Activated CD4-positive, alpha-beta memory T cell treated with anti-CD3 and anti-CD28 coated beads for 36 hours (primary cell): ENCODE measurements at regions of chr3 and their contacts with region 1.

Region 1: GRCh38 chr3:107938143-107938542 is 152.7 kb downstream of the CD47 start:
- DNase-seq: peak; percentile 20
- H3K4me3 Mint-ChIP-seq: no peak overlapping the region
- H3K27ac Mint-ChIP-seq: no peak overlapping the region
- H3K4me1 Mint-ChIP-seq: peaks cover 18% of the 10 kb centered on the region
- H3K27me3 Mint-ChIP-seq: no peaks in the 10 kb centered on the region

Region 2: GRCh38 chr3:107927361-107928083 is 10.6 kb before region 1 on chr3:
- CTCF ChIA-PET with region 1: interaction called, 27 read pairs
- POLR2A ChIA-PET with region 1: no interaction called
- intact Hi-C with region 1: loop called (anchors 2 kb)
- DNase-seq: peak; percentile 81
- H3K4me3 Mint-ChIP-seq: peak overlapping the region; percentile 72
- H3K27ac Mint-ChIP-seq: no peak overlapping the region
- H3K4me1 Mint-ChIP-seq: peaks cover 10% of the 10 kb centered on the region
- H3K27me3 Mint-ChIP-seq: peaks cover 5% of the 10 kb centered on the region

Region 3: DNA sequence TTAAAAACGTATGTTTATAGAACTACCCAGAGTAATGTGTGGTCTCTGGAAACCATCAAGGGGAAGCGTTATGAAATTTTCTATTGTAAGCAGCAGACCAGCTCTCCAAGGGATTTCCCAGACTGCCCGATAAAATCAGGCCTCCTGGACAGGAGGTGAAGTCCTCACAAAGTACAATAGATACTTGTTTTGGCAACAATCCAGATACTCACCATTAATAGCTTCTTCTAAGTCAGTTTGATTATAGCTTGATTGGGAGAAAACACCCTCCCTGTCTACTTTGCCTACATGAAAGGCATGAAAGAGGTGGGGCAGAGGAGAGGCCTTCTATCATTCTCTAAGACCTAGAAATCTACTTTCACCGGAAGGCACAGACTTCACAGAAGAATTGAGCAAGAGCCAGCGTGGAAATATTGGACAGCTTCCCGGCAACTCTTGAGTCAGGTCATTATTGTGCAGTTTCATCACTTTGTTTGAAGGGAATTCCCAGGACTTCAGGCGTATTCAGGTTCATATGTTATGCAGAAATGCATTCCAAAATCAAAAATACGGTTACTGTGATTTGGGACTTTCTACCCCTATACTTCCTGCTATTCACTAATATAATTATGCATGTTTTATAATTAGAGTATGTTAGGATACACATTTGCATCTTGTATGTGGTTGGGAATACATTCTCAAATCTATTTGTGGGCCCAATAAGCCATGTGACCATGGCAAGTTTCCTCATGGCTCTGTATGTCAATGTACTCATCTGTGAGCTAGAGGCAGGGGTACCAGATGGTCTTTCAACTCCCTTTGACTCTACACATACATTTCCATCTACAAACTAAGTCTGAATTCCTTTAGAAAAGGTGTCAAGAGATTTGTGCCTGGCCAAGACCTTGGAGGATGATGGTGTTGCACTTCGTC is 49.1 kb after region 1 on chr3:
- CTCF ChIA-PET with region 1: no interaction called
- POLR2A ChIA-PET with region 1: no interaction called
- intact Hi-C with region 1: loop called (anchors 2 kb)
- DNase-seq: no peak
- H3K4me3 Mint-ChIP-seq: no peak overlapping the region
- H3K27ac Mint-ChIP-seq: no peak overlapping the region
- H3K4me1 Mint-ChIP-seq: peaks cover 32% of the 10 kb centered on the region
- H3K27me3 Mint-ChIP-seq: no peaks in the 10 kb centered on the region

Region 4: GRCh38 chr3:108124337-108125152 is 186.4 kb after region 1 on chr3:
- CTCF ChIA-PET with region 1: no interaction called
- POLR2A ChIA-PET with region 1: interaction called, 4 read pairs
- intact Hi-C with region 1: loop called (anchors 2 kb)
- DNase-seq: peak; percentile 84
- H3K4me3 Mint-ChIP-seq: peak overlapping the region; percentile 91
- H3K27ac Mint-ChIP-seq: peak overlapping the region; percentile 99
- H3K4me1 Mint-ChIP-seq: peaks cover 55% of the 10 kb centered on the region
- H3K27me3 Mint-ChIP-seq: no peaks in the 10 kb centered on the region

Region 5: GRCh38 chr3:108388136-108389132 is 450.3 kb after region 1 on chr3:
- CTCF ChIA-PET with region 1: no interaction called
- POLR2A ChIA-PET with region 1: no interaction called
- intact Hi-C with region 1: loop called (anchors 5 kb)
- DNase-seq: peak; percentile 25
- H3K4me3 Mint-ChIP-seq: no peak overlapping the region
- H3K27ac Mint-ChIP-seq: no peak overlapping the region
- H3K4me1 Mint-ChIP-seq: peaks cover 19% of the 10 kb centered on the region
- H3K27me3 Mint-ChIP-seq: peaks cover 16% of the 10 kb centered on the region

Region 6: GRCh38 chr3:108477511-108478147 is 539.5 kb after region 1 on chr3:
- CTCF ChIA-PET with region 1: interaction called, 13 read pairs
- POLR2A ChIA-PET with region 1: no interaction called
- intact Hi-C with region 1: loop called (anchors 1 kb)
- DNase-seq: peak; percentile 67
- H3K4me3 Mint-ChIP-seq: no peak overlapping the region
- H3K27ac Mint-ChIP-seq: no peak overlapping the region
- H3K4me1 Mint-ChIP-seq: peaks cover 3% of the 10 kb centered on the region
- H3K27me3 Mint-ChIP-seq: peaks cover 1% of the 10 kb centered on the region

Region 7: DNA sequence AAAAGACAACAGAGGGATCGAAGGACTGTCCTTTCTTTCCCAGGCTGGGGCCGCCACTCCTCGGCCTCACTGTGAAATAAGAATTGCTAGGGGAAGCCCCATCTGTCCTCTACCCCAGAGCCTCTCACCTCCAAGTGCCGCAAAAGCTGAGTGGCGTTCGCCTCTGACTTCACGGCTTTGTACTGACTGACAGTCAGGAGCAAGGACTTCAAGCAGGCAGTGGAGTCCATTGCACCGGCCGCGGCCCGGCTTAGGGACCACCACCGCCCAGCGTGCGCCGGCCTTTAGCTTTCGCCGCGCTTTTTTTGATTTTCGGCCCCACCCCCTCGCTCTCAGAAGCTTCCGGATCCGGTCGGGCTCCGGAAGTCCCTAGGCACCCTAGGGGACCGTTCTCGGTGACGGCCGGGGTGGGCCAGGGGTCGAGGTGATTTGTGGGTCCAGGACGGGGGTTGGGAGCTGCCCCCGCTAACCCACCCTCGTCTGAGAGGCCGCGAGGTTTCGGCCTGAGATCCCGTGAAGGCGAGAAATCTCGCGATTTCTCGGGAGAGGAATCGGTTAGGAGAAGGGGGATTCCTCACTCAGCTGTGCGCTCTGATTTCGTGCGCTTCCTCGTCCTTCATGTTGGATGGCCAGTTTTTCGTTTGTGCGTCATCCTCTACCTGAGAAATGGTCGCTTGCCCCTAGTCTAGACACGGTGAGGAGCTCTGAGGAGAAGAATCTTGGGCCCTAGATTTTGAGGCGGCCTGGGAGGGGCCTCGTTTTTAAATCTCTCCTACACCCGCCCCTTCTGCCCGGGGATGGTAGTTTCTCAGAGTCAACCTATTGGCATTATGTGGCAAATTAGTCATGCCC is 651.2 kb after region 1 on chr3 and contains the starts of genes CIP2A and DZIP3:
- CTCF ChIA-PET with region 1: no interaction called
- POLR2A ChIA-PET with region 1: no interaction called
- intact Hi-C with region 1: loop called (anchors 10 kb)
- DNase-seq: peak; percentile 90
- H3K4me3 Mint-ChIP-seq: peak within 1 kb of the TSS; percentile 99
- H3K27ac Mint-ChIP-seq: peak within 1 kb of the TSS; percentile 99
- H3K4me1 Mint-ChIP-seq: peaks cover 29% of the 10 kb centered on the region
- H3K27me3 Mint-ChIP-seq: no peaks in the 10 kb centered on the region
- total RNA-seq, gene CIP2A: 39.5 to 45.1 TPM
- total RNA-seq, gene DZIP3: 11.3 to 11.4 TPM